Activated CD8-positive, alpha-beta T cell treated with anti-CD3 and anti-CD28 coated beads for 36 hours (primary cell): ENCODE measurements at regions of chr17 and their contacts with region 1.

Region 1: DNA sequence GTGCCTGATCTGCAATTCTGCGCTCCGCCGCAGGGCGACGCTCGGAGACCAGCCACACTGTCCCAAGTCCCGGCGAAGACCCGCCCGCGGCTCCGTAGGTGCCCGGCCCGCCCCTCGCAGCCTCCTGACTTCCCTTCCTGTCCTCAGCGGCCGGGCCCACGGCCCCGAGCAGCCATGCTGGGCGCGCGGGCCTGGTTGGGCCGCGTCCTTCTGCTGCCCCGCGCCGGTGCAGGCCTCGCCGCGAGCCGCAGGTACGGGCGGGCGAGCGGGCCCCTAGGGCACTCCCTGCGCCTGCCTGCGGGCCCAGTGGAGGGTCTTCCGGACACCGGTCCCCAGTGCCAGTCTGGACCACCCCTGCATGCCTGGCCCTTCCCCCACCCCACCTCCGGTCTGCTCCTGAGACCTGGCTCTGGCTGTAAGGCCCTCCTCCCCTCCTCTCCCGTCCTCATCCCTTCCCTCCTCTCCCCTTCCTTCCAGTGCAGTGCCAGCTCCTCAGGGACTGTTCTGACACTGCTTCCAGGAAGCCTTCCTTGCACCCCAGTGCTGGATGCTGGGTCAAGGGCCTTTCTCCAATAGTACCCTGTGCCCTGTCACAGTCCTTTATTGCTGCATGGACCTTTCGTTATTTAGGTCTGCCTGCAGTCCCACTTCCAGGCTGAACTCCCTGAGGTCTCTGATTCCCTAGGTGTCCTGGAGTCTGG is at the start of gene SPATA20:
- DNase-seq: peak; percentile 95
- ATAC-seq: peak; percentile 92
- H3K4me3 Mint-ChIP-seq: peak within 1 kb of the TSS; percentile 82
- H3K27ac Mint-ChIP-seq: peak within 1 kb of the TSS; percentile 76
- H3K4me1 Mint-ChIP-seq: peaks cover 9% of the 10 kb centered on the region
- H3K27me3 Mint-ChIP-seq: peaks cover 2% of the 10 kb centered on the region
- CTCF ChIP-seq: peak; percentile 99
- total RNA-seq, gene SPATA20: 29.0 to 36.2 TPM

Region 2: GRCh38 chr17:50560931-50561745 is 14.0 kb after region 1 on chr17:
- CTCF ChIA-PET with region 1: interaction called, 5 read pairs
- POLR2A ChIA-PET with region 1: interaction called, 11 read pairs
- intact Hi-C with region 1: no loop called
- DNase-seq: peak; percentile 24
- ATAC-seq: peak; percentile 15
- H3K4me3 Mint-ChIP-seq: no peak overlapping the region
- H3K27ac Mint-ChIP-seq: no peak overlapping the region
- H3K4me1 Mint-ChIP-seq: peaks cover 19% of the 10 kb centered on the region
- H3K27me3 Mint-ChIP-seq: peaks cover 58% of the 10 kb centered on the region
- CTCF ChIP-seq: no peak

Region 3: DNA sequence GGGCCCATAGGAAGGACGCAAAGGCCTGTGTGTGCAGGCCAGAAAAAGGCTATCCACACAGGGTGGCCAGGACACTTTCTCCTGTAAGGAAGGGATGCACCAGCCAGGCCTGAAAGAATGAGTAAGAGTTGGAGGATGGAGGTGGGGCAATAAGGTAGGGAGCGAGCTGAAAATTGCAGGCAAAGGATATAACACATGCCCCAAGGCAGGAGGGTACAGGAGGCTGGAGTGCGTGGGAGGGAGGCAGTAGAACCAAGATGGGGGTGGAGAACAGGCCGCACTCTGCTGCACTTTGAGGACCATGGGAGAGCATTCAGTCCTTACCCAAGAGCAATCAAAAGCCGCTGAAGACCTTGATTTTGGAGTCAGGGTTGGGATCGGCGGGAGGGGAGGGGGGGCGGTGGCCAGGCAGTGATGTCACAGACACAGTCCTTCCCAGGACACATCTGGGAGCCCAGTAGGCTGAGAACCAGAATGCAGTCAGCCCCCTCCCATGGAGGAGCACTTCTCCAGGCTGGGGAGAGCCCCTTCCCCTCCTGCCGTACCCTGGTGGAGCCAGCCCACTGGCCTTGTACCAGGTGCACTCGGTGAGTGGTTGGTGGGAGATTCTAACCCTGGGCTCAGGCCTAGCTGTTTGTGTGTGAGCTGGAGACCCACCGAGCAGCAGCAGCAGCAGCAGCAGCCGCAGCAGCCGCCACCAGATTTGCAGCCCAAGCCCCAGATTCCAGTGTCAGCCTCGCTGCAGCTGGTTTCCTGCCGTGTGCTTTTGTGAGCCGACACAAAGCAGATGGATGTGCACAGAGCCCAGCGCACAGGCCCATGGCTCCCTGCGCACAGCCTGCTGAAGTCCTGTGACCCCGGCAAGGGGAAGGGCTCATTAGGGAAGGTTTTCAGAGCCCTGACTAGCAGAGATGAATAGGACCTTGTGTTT is 143.0 kb after region 1 on chr17:
- CTCF ChIA-PET with region 1: no interaction called
- POLR2A ChIA-PET with region 1: no interaction called
- intact Hi-C with region 1: loop called (anchors 10 kb)
- DNase-seq: no peak
- ATAC-seq: no peak
- H3K4me3 Mint-ChIP-seq: no peak overlapping the region
- H3K27ac Mint-ChIP-seq: no peak overlapping the region
- H3K4me1 Mint-ChIP-seq: no peaks in the 10 kb centered on the region
- H3K27me3 Mint-ChIP-seq: no peaks in the 10 kb centered on the region
- CTCF ChIP-seq: no peak

Region 4: DNA sequence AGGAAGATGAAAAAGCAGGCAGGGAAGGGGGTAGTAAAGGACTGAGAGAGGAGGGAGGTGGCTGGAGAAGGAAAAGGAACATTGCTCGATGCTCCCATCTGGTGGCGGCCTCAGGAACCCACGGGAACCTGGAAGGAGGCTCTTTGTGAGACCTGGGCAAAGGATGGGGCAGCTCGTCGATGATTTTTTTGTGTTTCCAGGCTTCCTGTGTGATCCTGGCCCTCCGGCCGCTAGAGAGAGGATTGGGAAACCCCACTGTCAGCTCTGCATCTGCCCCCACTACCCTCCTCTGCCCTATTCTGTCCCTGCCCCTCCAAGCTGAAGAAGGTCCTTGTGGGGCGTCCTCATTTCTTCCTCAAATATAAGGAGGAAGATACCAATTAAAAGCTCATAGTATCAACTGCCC is 294.8 kb after region 1 on chr17:
- CTCF ChIA-PET with region 1: interaction called, 9 read pairs
- POLR2A ChIA-PET with region 1: no interaction called
- intact Hi-C with region 1: loop called (anchors 10 kb)
- DNase-seq: peak; percentile 73
- ATAC-seq: peak; percentile 86
- H3K4me3 Mint-ChIP-seq: no peak overlapping the region
- H3K27ac Mint-ChIP-seq: no peak overlapping the region
- H3K4me1 Mint-ChIP-seq: no peaks in the 10 kb centered on the region
- H3K27me3 Mint-ChIP-seq: no peaks in the 10 kb centered on the region
- CTCF ChIP-seq: peak; percentile 61